BJ (cell line): ENCODE measurements at regions of chr2 and their contacts with region 1.

Region 1: DNA sequence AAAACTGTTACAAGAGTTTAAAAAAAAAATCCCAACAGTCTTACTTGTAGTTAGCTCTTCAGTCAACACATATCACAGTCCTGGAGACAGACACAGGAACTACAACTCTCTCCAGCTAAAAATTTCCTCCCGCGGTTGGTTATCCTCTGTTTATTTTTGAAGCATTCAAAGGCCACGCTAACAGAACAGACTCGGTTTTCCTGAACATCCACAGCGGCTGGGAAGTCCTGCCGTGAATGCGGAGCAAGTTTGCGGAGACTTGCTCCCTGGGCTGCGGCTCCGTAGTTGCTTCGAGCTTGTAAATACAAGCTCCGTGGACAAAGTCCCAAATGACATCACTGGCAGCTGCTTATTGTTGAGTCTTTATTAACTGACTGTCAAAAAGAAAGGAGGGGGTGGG is at the start of gene NCKAP5:
- DNase-seq: no peak
- H3K4me3 ChIP-seq: peak within 1 kb of the TSS; percentile 15
- H3K27me3 ChIP-seq: no peaks in the 10 kb centered on the region
- CTCF ChIP-seq: 0 out of 2 replicates have a peak, but pooled peaks have one; percentile 7
- polyA plus RNA-seq, gene NCKAP5: 2.1 and 2.5 TPM in 2 replicates

Region 2: DNA sequence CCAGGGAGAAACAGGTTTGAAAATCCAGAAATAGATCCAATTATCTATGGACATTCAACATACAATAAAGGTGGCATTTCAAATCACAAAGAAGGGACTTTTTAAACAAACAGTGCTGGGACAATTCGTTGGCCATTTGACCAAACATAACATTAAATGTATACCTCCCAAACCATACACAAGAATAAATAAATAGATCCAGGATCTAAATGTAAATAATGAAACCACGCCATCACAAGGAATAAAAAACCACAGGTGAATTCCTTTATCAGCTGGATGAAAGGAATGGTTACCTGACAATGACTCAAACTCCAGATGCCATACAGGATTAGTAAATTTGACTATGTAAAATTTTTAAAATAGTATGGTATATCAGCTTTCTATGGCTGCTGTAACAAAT is 290.4 kb before region 1 on chr2:
- CTCF ChIA-PET with region 1: no interaction called
- POLR2A ChIA-PET with region 1: interaction called, 16 read pairs
- DNase-seq: no peak
- H3K4me3 ChIP-seq: no peak overlapping the region
- H3K27me3 ChIP-seq: no peaks in the 10 kb centered on the region
- CTCF ChIP-seq: no peak

Region 3: DNA sequence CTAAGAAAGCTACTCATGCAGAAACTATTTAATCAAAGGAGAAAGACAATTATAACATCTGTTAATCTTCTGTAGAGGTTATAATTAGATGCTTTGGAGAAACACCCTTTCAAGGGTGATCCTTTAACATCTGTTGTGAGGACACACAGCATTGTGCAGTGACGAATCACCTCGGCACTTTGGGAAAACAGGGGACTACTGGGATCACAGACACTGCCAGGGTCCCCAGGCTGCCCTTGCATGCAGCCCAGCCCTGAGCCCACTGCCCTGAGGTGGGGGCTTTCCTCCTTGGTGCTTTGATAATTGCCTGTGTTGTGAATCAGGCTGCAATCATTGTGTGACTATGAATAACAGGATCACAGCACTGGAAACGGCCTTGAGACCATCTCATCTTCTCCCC is 10.6 kb before region 1 on chr2:
- CTCF ChIA-PET with region 1: no interaction called
- POLR2A ChIA-PET with region 1: no interaction called
- DNase-seq: no peak
- H3K4me3 ChIP-seq: no peak overlapping the region
- H3K27me3 ChIP-seq: no peaks in the 10 kb centered on the region
- CTCF ChIP-seq: no peak